ENCODE measurements at regions of chrX and their contacts with region 1.

Region 1: DNA sequence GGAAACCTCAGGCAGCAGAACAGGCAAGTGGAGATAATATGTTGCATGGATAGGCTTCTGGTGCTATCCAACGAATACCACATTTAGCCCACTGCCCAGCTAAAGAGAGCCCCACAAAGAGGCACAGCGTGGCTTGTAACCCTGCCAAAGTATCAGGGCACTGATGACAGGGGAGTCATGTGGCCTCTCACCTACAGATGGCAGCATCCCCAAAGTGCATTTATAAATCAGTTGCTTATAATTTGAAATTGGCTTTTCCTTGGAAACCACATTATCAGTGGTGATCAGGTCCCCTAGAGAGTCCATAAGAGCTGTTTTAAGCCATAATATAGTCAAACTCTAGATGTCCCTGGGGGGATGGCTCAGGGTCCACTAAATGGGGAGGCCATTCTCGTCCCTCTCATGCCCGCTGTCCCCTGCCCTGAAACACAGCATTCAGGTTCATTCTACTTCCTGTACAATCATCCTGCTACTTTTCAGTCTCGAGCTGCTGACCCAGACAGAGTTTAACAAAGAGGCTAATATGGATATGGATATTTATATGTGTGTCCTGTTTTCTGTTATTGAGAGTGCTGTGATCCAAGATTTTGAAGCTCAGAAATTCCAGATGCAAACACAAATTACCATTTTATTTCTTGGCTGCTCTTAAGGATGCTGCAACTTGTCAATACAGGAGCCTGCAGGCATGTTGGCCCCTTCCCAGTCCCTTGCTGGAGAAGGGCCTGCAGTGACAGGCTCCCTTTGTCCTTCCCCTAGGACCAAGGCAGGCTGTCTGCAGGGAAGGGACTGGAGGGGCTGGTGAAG is 28.5 kb downstream of the SRPX start:
- DNase-seq: peak in 1 of 3 donors; percentile 42
- ATAC-seq: peak in 1 of 2 donors; percentile 43
- H3K4me3 ChIP-seq: no peak overlapping the region
- H3K27ac ChIP-seq: no peak overlapping the region
- H3K4me1 ChIP-seq: peaks cover 2% of the 10 kb centered on the region
- H3K27me3 ChIP-seq: no peaks in the 10 kb centered on the region

Region 2: GRCh38 chrX:38282044-38282443 is 89.8 kb after region 1 on chrX:
- intact Hi-C with region 1: loop called in 2 of 4 experiments (anchors 10 kb)
- DNase-seq: peak in 2 of 3 donors; percentile 16 to 51
- ATAC-seq: peak; percentile 59 to 71
- H3K4me3 ChIP-seq: no peak overlapping the region
- H3K27ac ChIP-seq: no peak overlapping the region
- H3K4me1 ChIP-seq: no peaks in the 10 kb centered on the region
- H3K27me3 ChIP-seq: no peaks in the 10 kb centered on the region